ENCODE measurements at regions of chr1 and their contacts with region 1.

Region 1: GRCh38 chr1:181166377-181167196 is 78.1 kb downstream of the IER5 start:
- DNase-seq: peak; percentile 74
- H3K4me3 ChIP-seq: no peak overlapping the region
- H3K27ac ChIP-seq: no peak overlapping the region
- H3K4me1 ChIP-seq: no peaks in the 10 kb centered on the region
- H3K27me3 ChIP-seq: peaks cover 2 to 10% of the 10 kb centered on the region in 2 experiments
- CTCF ChIP-seq: peak; percentile 71 to 82
- POLR2A ChIP-seq: no peak

Region 2: GRCh38 chr1:181033799-181034451 is 132.7 kb before region 1 on chr1 and contains the start of gene MR1:
- CTCF ChIA-PET with region 1: interaction called, 8 read pairs
- POLR2A ChIA-PET with region 1: no interaction called
- dilution Hi-C with region 1: loop called (anchors 10 kb)
- intact Hi-C with region 1: loop called (anchors 1 kb)
- DNase-seq: peak; percentile 91
- H3K4me3 ChIP-seq: peak within 1 kb of the TSS in 2 of 3 experiments; percentile 1 to 43
- H3K27ac ChIP-seq: peak within 1 kb of the TSS; percentile 18
- H3K4me1 ChIP-seq: peaks cover 10% of the 10 kb centered on the region
- H3K27me3 ChIP-seq: no peaks in the 10 kb centered on the region
- CTCF ChIP-seq: no peak
- POLR2A ChIP-seq: no peak
- total RNA-seq, gene MR1: 1.1 and 1.3 TPM in 2 replicates

Region 3: GRCh38 chr1:181152892-181153633 is 13.5 kb before region 1 on chr1:
- CTCF ChIA-PET with region 1: interaction called, 10 read pairs
- POLR2A ChIA-PET with region 1: no interaction called
- dilution Hi-C with region 1: no loop called
- intact Hi-C with region 1: loop called (anchors 1 kb)
- DNase-seq: peak; percentile 98
- H3K4me3 ChIP-seq: no peak overlapping the region
- H3K27ac ChIP-seq: no peak overlapping the region
- H3K4me1 ChIP-seq: peaks cover 7% of the 10 kb centered on the region
- H3K27me3 ChIP-seq: no peaks in the 10 kb centered on the region
- CTCF ChIP-seq: peak; percentile 31 to 72
- POLR2A ChIP-seq: no peak

Region 4: GRCh38 chr1:181314959-181315358 is 148.4 kb after region 1 on chr1:
- CTCF ChIA-PET with region 1: no interaction called
- POLR2A ChIA-PET with region 1: no interaction called
- dilution Hi-C with region 1: no loop called
- intact Hi-C with region 1: no loop called
- DNase-seq: no peak
- H3K4me3 ChIP-seq: no peak overlapping the region
- H3K27ac ChIP-seq: no peak overlapping the region
- H3K4me1 ChIP-seq: no peaks in the 10 kb centered on the region
- H3K27me3 ChIP-seq: peaks cover 31 to 36% of the 10 kb centered on the region in 2 experiments
- CTCF ChIP-seq: no peak
- POLR2A ChIP-seq: no peak

Measured in endothelial cell of umbilical vein (primary cell).